Body of pancreas (tissue), 4 donors: ENCODE measurements at regions of chr3 and their contacts with region 1.

Region 1: DNA sequence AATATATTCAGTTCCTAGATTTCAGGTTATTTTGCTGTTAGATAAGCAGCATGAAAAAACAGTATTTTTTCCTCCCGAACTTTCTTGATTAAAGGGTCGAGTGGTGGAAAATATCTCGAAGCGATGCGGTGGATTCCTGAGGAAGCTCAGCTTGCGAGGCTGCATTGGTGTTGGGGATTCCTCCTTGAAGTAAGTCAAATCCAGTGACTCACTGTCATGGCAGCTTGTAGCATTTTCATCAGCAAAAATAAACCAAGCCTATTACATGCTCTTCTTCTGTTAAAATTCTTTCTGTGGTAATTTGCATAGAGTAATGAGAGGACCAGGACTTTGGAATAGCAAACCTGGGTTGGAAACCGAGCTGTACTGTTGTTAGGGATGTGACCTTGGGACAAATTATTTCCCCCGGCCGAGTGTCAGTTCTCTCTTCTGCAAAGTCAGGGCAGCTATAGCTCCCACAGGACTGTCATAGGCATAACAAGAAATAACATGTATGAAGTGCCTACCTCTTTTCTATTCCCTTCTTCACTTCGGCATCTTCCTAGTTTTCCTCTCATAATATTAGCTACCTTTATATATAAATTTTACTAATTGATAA is 75.6 kb downstream of the UBP1 start:
- DNase-seq: no peak
- ATAC-seq: no peak
- H3K4me3 ChIP-seq: no peak overlapping the region
- H3K27ac ChIP-seq: no peak overlapping the region
- H3K4me1 ChIP-seq: peaks cover 5% of the 10 kb centered on the region
- H3K27me3 ChIP-seq: no peaks in the 10 kb centered on the region
- CTCF ChIP-seq: no peak
- POLR2A ChIP-seq: no peak

Region 2: DNA sequence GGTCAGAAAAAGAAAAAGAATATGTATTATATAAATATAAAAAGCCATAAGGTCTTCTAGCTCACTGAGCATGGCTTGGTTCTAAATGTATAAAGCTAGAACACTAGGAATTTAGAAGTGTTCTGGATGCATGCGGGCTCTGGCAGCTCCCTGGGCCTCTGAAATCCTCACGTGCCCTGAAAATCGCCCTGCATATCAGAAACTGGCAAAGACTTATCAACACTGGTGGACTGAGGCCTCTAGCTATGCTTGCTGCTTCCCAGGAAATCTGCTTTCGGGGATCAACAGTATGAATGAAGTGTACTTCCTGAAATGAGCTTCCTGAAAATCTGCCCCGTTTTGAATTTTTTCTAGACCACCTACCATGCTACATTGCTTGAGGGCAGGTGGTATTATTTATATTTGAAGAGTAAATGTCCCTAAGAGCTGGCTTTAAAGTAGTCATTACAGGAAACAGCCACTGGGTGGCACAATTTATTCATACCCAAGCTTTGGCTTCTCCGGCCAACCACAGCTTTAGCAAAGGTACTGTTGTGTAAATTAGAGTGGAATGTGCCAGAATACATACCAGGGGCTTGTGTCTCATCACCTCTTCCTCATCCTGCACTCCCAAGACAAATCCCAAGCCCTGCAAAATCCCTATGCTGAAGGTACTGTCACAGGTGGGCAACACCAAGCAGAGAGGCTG is 233.2 kb before region 1 on chr3:
- intact Hi-C with region 1: loop called (anchors 5 kb)
- DNase-seq: peak; percentile 46 to 72 (median 62)
- ATAC-seq: peak; percentile 69
- H3K4me3 ChIP-seq: no peak overlapping the region
- H3K27ac ChIP-seq: no peak overlapping the region
- H3K4me1 ChIP-seq: peaks cover 3% of the 10 kb centered on the region
- H3K27me3 ChIP-seq: no peaks in the 10 kb centered on the region
- CTCF ChIP-seq: peak; percentile 27 to 77 (median 72)
- POLR2A ChIP-seq: no peak

Region 3: DNA sequence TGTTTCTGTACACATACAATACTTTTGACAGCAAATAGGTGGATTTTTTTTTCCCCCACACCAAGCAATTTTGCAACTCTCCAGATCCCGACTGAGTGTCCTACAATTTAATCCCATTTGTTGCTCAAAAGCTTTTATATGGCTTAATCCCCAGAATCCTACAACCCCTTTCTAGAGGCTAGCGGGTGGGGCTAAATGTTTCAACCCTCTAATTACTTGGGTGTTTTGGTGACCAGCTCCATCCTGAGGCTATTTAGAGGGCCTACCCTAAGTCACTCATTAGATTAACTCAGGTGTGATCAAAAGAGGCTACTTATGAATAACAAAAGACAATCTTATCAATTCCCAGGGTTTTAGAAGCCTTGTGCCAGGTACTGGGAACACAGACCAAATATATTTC is 108.4 kb before region 1 on chr3:
- intact Hi-C with region 1: no loop called
- DNase-seq: no peak
- ATAC-seq: no peak
- H3K4me3 ChIP-seq: no peak overlapping the region
- H3K27ac ChIP-seq: no peak overlapping the region
- H3K4me1 ChIP-seq: no peaks in the 10 kb centered on the region
- H3K27me3 ChIP-seq: no peaks in the 10 kb centered on the region
- CTCF ChIP-seq: no peak
- POLR2A ChIP-seq: no peak

Region 4: GRCh38 chr3:33954956-33955355 is 590.3 kb after region 1 on chr3:
- intact Hi-C with region 1: no loop called
- DNase-seq: no peak
- ATAC-seq: no peak
- H3K4me3 ChIP-seq: no peak overlapping the region
- H3K27ac ChIP-seq: no peak overlapping the region
- H3K4me1 ChIP-seq: no peaks in the 10 kb centered on the region
- H3K27me3 ChIP-seq: no peaks in the 10 kb centered on the region
- CTCF ChIP-seq: no peak
- POLR2A ChIP-seq: no peak